Common myeloid progenitor, CD34-positive (primary cell): ENCODE measurements at regions of chr2 and their contacts with region 1.

Region 1: DNA sequence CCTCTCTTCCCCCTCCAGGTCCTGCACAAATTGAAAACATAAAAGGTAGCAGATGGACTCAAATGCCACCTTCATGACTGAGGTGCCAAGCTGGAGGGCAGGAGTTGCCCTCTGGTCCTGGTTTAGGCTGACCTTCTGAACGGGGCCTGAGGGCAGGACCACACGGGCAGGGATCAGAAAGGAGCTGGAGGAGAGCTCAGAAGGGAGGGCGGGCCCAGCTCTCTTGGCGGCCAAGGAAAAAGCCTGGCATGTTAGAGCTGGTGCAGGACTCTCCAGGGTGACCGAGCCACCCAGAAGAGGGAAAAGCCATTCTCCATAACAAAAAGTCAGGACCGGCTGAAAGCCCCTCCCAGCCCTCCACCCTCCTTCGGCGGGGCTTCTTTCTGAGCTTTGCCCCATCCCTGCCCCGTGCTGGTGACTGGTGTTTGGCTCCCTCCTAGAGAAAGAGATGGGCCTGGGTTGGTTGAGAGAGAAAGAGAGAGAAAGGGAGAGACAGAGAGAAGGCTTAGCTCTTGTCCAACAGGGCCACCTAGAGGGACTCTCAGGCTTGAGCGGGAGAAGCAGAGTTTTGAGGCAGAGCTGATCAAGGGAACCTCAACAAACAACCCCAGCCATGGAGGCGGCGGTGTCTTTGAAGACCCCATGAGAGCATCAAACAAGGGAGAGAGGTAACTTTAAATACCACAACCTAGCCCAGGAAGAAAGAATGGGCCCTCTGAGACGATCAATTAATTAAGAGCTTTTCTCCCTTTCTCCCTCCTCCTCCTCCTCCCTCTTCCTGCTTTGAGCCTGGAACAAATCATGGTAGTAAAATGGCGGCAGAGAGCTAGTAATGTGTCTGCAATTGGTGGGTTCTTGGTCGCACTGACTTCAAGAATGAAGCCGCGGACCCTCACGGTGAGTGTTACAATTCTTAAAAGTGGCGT is 50.8 kb downstream of the WIPF1 start:
- DNase-seq: peak; percentile 25 to 67 (median 57)
- H3K4me3 ChIP-seq: no peak overlapping the region
- H3K27ac ChIP-seq: peak overlapping the region in 1 of 2 experiments; percentile 32
- H3K4me1 ChIP-seq: no peaks in the 10 kb centered on the region
- H3K27me3 ChIP-seq: no peaks in the 10 kb centered on the region

Region 2: DNA sequence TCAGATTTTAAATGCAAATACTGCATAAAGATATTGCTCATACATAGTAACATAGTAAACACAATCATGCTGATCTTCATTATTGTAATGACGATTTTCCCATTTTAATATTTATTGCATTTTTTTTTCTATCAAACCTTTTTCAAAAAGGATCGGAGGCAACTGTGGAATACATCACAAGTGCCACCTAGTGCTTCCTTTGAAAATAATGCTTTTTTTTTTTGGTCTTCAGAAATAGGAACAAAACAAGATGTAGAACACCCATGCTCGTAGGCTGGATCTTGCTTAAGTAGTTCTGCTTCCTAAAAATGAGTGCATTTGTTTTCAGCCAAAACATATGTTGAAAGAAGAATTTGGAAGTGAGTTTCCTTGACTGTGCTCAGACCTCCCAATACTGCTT is 24.3 kb before region 1 on chr2:
- CTCF ChIA-PET with region 1: interaction called, 12 read pairs
- POLR2A ChIA-PET with region 1: no interaction called
- DNase-seq: peak; percentile 31 to 63 (median 57)
- H3K4me3 ChIP-seq: no peak overlapping the region
- H3K27ac ChIP-seq: no peak overlapping the region
- H3K4me1 ChIP-seq: peaks cover 0 to 5% (median 2%) of the 10 kb centered on the region in 4 experiments
- H3K27me3 ChIP-seq: peaks cover 0 to 2% (median 0%) of the 10 kb centered on the region in 5 experiments